ENCODE measurements at regions of chr3 and their contacts with region 1.

Region 1: GRCh38 chr3:4284865-4285264 is 18.3 kb upstream of the SETMAR start:
- DNase-seq: no peak
- ATAC-seq: no peak

Region 2: GRCh38 chr3:3200632-3201212 is 1084.1 kb before region 1 on chr3:
- intact Hi-C with region 1: loop called in 1 of 2 experiments (anchors 5 kb)
- DNase-seq: peak in 1 of 2 donors; percentile 9
- ATAC-seq: peak; percentile 73

Region 3: GRCh38 chr3:4551051-4551711 is 266.3 kb after region 1 on chr3:
- intact Hi-C with region 1: no loop called
- DNase-seq: no peak
- ATAC-seq: no peak

Measured in left colon (tissue), 2 donors.